ENCODE measurements at regions of chr1 and their contacts with region 1.

Region 1: DNA sequence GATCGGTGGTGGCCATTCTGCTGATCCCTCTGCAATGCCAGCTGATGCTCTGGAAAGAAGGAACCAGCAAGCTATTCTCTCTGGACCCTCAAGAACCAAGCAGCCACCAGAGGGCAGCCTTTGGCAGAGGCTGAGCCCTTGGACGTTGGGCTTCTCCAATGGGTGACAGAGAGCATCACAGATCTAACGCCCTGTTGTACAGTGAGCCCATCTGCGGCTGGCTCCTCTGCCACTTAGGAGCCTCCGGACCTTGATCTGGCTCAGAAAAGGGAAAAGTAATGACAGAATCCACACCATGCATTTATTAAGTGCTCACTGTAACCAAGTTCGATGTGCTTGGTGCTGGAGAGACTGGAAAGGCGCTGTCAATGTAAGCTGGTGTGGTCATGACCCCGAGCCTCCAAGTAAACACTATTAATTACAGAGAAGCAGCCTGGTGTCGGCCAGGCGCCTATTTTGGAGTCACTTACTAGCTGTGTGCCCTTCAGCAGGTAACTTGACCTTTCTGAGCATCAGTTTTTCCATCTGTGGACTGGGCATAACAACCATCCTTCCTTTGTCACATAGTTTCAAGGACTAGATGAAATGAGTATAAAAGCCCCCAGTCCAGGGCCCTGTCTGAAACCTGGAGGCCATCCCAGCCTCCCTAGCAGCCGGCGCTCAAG is 34.9 kb downstream of the ECE1 start:
- DNase-seq: peak; percentile 85
- H3K4me3 Mint-ChIP-seq: no peak overlapping the region
- H3K27ac Mint-ChIP-seq: no peak overlapping the region
- H3K4me1 Mint-ChIP-seq: peaks cover 8% of the 10 kb centered on the region
- H3K27me3 Mint-ChIP-seq: no peaks in the 10 kb centered on the region
- CTCF ChIP-seq: peak; percentile 68

Region 2: GRCh38 chr1:21270086-21270689 is 14.8 kb after region 1 on chr1:
- CTCF ChIA-PET with region 1: interaction called, 10 read pairs
- intact Hi-C with region 1: no loop called
- DNase-seq: peak; percentile 65
- H3K4me3 Mint-ChIP-seq: no peak overlapping the region
- H3K27ac Mint-ChIP-seq: no peak overlapping the region
- H3K4me1 Mint-ChIP-seq: peaks cover 10% of the 10 kb centered on the region
- H3K27me3 Mint-ChIP-seq: no peaks in the 10 kb centered on the region
- CTCF ChIP-seq: peak; percentile 51

Region 3: DNA sequence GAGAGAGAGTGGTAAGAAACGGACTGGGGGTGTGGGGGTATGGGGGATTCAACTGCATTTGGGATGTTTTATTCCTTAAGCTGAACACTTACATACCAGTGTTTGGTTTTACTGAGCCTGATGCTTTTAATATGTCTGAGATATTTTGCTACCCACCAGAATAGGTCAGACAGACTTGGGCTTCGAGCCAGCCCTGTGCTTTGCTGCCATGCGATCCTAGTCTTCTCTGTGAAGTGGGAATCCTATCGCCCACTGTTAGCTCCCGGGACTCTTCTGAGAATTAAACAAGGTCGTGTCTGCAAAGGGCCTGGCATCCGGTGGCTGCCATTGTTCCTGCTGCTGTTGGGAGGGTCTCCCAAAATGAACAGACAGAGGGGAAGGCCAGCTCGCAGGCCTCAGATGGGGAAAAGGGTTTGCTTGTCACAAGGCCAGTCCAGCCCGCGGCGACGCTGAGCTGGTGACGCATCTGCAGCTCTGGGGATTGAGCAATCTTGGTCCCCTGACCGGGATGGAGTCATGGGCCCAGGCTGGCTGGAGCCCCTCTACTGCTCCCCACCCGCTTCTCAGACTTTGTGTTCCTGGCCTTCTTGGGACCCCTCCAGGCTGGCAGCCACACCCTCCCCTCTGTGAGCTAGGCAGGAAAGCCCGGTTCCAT is 61.8 kb after region 1 on chr1:
- CTCF ChIA-PET with region 1: no interaction called
- intact Hi-C with region 1: no loop called
- DNase-seq: no peak
- H3K4me3 Mint-ChIP-seq: no peak overlapping the region
- H3K27ac Mint-ChIP-seq: no peak overlapping the region
- H3K4me1 Mint-ChIP-seq: peaks cover 33% of the 10 kb centered on the region
- H3K27me3 Mint-ChIP-seq: no peaks in the 10 kb centered on the region
- CTCF ChIP-seq: no peak

Region 4: GRCh38 chr1:21334214-21335087 is 79.0 kb after region 1 on chr1:
- CTCF ChIA-PET with region 1: interaction called, 10 read pairs
- intact Hi-C with region 1: no loop called
- DNase-seq: peak; percentile 68
- H3K4me3 Mint-ChIP-seq: peak overlapping the region; percentile 70
- H3K27ac Mint-ChIP-seq: peak overlapping the region; percentile 96
- H3K4me1 Mint-ChIP-seq: peaks cover 48% of the 10 kb centered on the region
- H3K27me3 Mint-ChIP-seq: no peaks in the 10 kb centered on the region
- CTCF ChIP-seq: peak; percentile 73